Naive thymus-derived CD4-positive, alpha-beta T cell (primary cell): ENCODE measurements at regions of chr2 and their contacts with region 1.

Region 1: GRCh38 chr2:99337113-99338028 is at the start of gene EIF5B:
- DNase-seq: peak; percentile 78 to 92 (median 84)
- ATAC-seq: peak; percentile 78
- H3K4me3 ChIP-seq: peak within 1 kb of the TSS; percentile 85
- H3K4me3 Mint-ChIP-seq: no peak within 1 kb of the TSS
- H3K27ac ChIP-seq: peak within 1 kb of the TSS; percentile 78
- H3K27ac Mint-ChIP-seq: no peak within 1 kb of the TSS
- H3K4me1 ChIP-seq: peaks cover 20 to 25% of the 10 kb centered on the region in 2 donors
- H3K4me1 Mint-ChIP-seq: peaks cover 20 to 49% (median 45%) of the 10 kb centered on the region in 7 donors
- H3K27me3 ChIP-seq: no peaks in the 10 kb centered on the region
- H3K27me3 Mint-ChIP-seq: no peaks in the 10 kb centered on the region
- total RNA-seq, gene EIF5B: 28.0 to 49.0 (median 37.6) TPM

Region 2: GRCh38 chr2:97718051-97718882 is 1619.1 kb before region 1 on chr2:
- CTCF ChIA-PET with region 1: no interaction called
- POLR2A ChIA-PET with region 1: no interaction called
- intact Hi-C with region 1: loop called in 1 of 2 experiments (anchors 2 kb)
- DNase-seq: peak in 8 of 9 donors; percentile 66 to 74 (median 69)
- ATAC-seq: peak; percentile 87
- H3K4me3 ChIP-seq: peak overlapping the region; percentile 68
- H3K4me3 Mint-ChIP-seq: peak overlapping the region; percentile 86 to 100 (median 94)
- H3K27ac ChIP-seq: peak overlapping the region; percentile 95
- H3K27ac Mint-ChIP-seq: peak overlapping the region; percentile 89 to 100 (median 97)
- H3K4me1 ChIP-seq: peaks cover 73 to 77% of the 10 kb centered on the region in 2 donors
- H3K4me1 Mint-ChIP-seq: peaks cover 64 to 91% (median 75%) of the 10 kb centered on the region in 7 donors
- H3K27me3 ChIP-seq: no peaks in the 10 kb centered on the region
- H3K27me3 Mint-ChIP-seq: no peaks in the 10 kb centered on the region

Region 3: DNA sequence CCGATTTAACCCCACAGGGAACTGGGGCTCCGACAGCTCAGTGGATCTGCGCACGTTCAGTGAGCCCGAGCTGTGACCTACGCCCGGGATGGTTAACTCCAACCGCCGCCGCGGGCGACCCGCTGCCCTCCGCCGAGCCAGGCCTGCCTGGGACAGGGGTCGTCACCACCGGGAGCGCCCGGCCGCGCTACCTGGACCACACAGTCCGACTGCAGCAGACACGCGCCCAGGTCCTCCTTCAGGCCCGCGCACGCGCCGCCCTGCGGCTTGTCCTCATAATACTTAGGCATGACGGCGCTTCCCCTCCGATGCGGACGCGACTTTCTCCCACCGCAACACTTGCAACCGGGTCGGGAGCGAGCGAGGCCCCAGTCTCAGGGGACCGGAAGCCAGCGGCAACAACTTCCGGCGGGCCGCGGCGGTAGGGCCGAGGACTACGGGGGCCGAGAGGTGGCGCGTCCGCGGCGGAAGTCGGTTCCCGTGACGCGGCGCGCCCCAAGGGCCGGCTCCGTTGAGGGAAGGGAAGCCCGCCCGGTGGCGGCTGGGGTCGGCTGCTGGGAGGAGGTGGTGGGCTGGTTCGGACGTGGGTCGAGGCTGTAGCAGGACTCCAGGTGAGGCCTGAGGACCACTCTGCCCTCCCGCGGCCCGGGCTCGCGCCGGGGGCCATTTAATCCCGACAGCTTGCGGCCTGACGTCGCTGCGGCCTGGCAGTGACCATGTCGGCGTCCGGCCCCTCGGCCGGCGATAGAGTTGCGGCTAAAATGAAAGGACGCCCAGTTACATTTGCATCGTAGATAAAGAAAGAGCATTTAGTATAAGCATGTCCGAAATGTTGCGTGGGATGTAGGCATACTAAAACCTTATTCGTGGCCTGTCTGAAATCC is 729.0 kb before region 1 on chr2 and contains the starts of genes COA5 and UNC50:
- CTCF ChIA-PET with region 1: no interaction called
- POLR2A ChIA-PET with region 1: no interaction called
- intact Hi-C with region 1: loop called (anchors 1 kb)
- DNase-seq: peak; percentile 82 to 94 (median 87)
- ATAC-seq: peak; percentile 93
- H3K4me3 ChIP-seq: peak within 1 kb of the TSS; percentile 94
- H3K4me3 Mint-ChIP-seq: peak within 1 kb of the TSS; percentile 82 to 97 (median 90)
- H3K27ac ChIP-seq: peak within 1 kb of the TSS; percentile 97
- H3K27ac Mint-ChIP-seq: peak within 1 kb of the TSS; percentile 81 to 97 (median 92)
- H3K4me1 ChIP-seq: peaks cover 39 to 48% of the 10 kb centered on the region in 2 donors
- H3K4me1 Mint-ChIP-seq: peaks cover 51 to 82% (median 70%) of the 10 kb centered on the region in 7 donors
- H3K27me3 ChIP-seq: no peaks in the 10 kb centered on the region
- H3K27me3 Mint-ChIP-seq: no peaks in the 10 kb centered on the region
- total RNA-seq, gene COA5: 23.8 to 55.2 (median 29.2) TPM
- total RNA-seq, gene UNC50: 22.2 to 41.3 (median 29.9) TPM

Region 4: DNA sequence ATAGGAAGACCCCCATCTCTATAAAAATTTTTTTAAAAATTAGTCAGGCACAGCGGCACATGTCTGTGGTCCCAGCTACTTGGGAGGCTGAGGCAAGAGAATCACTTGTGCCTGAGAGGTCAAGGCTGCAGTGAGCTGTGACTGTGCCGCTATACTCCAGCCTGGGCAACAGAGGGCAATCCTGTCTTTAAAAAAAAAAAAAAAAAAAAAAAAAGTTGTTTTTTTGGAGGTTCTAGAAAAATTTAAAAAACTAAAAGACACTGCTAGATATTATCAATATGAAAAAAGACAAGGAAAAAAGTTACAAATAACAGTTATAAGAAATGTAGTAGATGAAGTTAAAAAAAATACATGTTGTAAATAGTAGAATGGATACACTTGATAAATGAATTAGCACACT is 251.9 kb before region 1 on chr2:
- CTCF ChIA-PET with region 1: interaction called, 3 read pairs
- POLR2A ChIA-PET with region 1: no interaction called
- intact Hi-C with region 1: loop called in 1 of 2 experiments (anchors 5 kb)
- DNase-seq: peak in 4 of 9 donors; percentile 1 to 7 (median 4)
- ATAC-seq: no peak
- H3K4me3 ChIP-seq: no peak overlapping the region
- H3K4me3 Mint-ChIP-seq: no peak overlapping the region
- H3K27ac ChIP-seq: no peak overlapping the region
- H3K27ac Mint-ChIP-seq: no peak overlapping the region
- H3K4me1 ChIP-seq: peaks cover 0 to 7% of the 10 kb centered on the region in 2 donors
- H3K4me1 Mint-ChIP-seq: peaks cover 0 to 6% (median 4%) of the 10 kb centered on the region in 7 donors
- H3K27me3 ChIP-seq: no peaks in the 10 kb centered on the region
- H3K27me3 Mint-ChIP-seq: peaks cover 0 to 28% (median 6%) of the 10 kb centered on the region in 5 donors

Region 5: DNA sequence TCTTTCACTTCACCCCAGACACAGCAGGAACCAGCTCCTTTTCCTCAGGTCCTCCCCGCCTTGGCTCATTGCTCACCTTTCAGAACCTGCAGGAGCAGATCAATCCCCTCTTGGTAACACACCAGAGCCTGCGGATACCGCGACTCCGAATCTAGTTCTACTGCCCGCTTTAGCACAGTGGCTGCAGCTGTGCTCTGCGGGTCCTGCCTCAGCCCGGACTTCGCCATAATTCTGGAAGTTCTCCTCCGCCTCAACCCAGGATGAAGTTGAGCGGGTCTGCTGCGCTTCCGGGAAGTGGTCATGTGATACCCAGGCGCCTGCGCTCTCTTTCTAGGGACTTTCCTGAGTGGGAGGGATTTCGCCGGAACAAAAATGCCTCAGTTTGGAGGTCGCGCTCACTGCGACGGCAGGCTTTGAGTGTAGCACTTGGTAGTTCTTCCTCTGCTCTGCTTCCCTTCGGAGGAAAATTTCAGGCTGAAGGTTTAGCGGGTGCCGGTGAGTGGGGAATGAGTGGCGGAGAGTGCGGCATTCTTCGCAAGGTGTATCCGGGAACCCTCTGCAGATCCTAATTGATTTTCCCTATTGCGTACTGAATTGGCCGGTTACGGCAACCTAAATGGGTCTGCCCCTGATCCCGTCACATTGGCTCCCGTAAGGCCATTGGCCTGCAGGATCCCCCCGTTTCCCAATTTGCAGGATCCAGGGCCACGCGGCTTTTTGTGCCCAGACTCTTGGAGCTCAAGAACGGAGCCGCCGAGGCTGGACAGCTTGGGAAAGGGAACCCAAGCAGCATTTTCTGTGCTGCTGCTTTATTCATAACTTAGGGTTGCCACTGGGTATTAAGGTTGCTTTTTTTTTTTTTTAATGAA is 156.4 kb before region 1 on chr2 and contains the starts of genes MITD1 and MRPL30:
- CTCF ChIA-PET with region 1: interaction called, 3 read pairs
- POLR2A ChIA-PET with region 1: interaction called, 16 read pairs
- intact Hi-C with region 1: loop called (anchors 1 kb)
- DNase-seq: peak; percentile 72 to 94 (median 90)
- ATAC-seq: peak; percentile 97
- H3K4me3 ChIP-seq: peak within 1 kb of the TSS; percentile 97
- H3K4me3 Mint-ChIP-seq: peak within 1 kb of the TSS; percentile 94 to 100 (median 99)
- H3K27ac ChIP-seq: peak within 1 kb of the TSS; percentile 89
- H3K27ac Mint-ChIP-seq: peak within 1 kb of the TSS; percentile 93 to 99 (median 99)
- H3K4me1 ChIP-seq: peaks cover 30 to 32% of the 10 kb centered on the region in 2 donors
- H3K4me1 Mint-ChIP-seq: peaks cover 41 to 85% (median 74%) of the 10 kb centered on the region in 7 donors
- H3K27me3 ChIP-seq: no peaks in the 10 kb centered on the region
- H3K27me3 Mint-ChIP-seq: no peaks in the 10 kb centered on the region
- total RNA-seq, gene MITD1: 26.8 to 80.5 (median 73.8) TPM
- total RNA-seq, gene MRPL30: 16.1 to 26.0 (median 21.9) TPM

Region 6: DNA sequence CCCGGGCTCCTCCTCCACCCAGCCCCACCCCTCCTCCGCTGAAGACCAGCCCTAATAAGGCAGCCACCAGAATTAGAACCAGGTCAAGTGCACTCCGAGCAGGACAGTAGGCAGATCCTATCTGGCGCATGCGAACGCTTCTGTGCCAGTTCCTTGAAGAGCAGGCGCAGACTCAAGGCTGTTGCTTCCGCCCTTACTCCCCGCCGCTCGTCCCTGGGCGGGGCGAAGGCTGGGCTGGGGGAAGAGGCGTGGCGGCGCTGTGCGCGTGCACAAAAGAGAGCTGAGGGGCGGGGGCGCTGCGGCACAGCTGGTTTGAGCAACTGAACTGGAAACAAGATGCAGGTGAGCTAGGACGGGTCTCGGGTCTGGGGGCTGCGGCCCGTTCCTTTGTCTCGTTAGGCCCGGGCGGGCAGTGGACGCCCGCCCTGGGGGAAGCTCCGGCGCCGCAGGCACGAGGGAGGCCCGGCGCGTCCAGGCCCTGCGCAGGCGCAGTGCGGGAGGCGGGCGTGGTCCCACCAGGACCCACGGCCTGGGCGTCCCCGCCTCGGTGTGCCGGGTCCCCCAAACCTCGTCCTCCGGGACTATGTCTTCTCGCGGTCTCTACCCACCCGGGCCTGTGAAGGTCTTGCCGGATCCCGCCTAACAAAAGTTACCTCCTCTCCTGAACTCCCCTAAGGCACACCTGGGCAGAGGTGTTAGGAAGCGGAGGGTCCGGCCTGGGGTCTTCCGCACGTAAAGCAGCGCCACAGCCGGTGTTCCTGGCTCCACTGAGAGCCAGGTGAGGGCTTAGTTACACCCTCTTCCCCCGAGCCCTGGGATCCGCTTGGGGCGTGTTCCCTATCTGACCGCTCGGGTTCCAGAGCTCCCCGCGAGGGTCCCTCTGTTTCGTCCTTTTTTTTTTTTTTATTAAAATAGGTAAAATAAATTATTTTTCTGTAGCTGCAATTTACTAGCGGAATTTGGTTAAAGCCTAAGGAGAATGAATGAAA is 1225.7 kb after region 1 on chr2 and contains the start of gene PDCL3:
- CTCF ChIA-PET with region 1: no interaction called
- POLR2A ChIA-PET with region 1: no interaction called
- intact Hi-C with region 1: loop called (anchors 2 kb)
- DNase-seq: peak; percentile 91 to 97 (median 96)
- ATAC-seq: peak; percentile 94
- H3K4me3 ChIP-seq: peak within 1 kb of the TSS; percentile 99
- H3K4me3 Mint-ChIP-seq: peak within 1 kb of the TSS; percentile 85 to 100 (median 97)
- H3K27ac ChIP-seq: peak within 1 kb of the TSS; percentile 78
- H3K27ac Mint-ChIP-seq: peak within 1 kb of the TSS; percentile 97 to 99 (median 99)
- H3K4me1 ChIP-seq: peaks cover 15 to 16% of the 10 kb centered on the region in 2 donors
- H3K4me1 Mint-ChIP-seq: peaks cover 14 to 64% (median 52%) of the 10 kb centered on the region in 7 donors
- H3K27me3 ChIP-seq: no peaks in the 10 kb centered on the region
- H3K27me3 Mint-ChIP-seq: peaks cover 0 to 2% (median 0%) of the 10 kb centered on the region in 5 donors
- total RNA-seq, gene PDCL3: 16.6 to 31.9 (median 19.9) TPM